AG04449 (cell line): ENCODE measurements at regions of chr11 and their contacts with region 1.

Region 1: DNA sequence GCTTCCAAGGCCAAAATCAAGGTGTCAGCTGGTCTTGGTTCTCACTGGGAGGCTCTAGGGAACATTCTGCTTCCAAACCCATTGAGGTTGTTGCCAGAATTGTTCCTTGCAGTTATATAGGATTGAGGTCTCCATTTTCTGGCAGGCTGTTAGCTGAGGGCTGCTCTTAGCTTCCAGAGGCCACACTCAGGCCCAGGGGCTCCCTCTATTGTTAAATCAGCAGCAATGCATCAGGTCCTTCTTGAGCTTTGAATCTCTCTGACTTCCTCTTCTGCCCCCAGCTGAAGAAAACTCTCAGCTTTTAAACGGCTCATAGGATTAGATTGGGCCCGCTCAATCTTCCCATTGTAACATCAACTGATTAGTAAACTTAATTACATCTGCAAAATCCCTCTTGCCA is 39.3 kb upstream of the BSX start:
- DNase-seq: no peak
- H3K4me3 ChIP-seq: no peak overlapping the region
- CTCF ChIP-seq: peak; percentile 76

Region 2: GRCh38 chr11:122578168-122578825 is 442.7 kb before region 1 on chr11:
- CTCF ChIA-PET with region 1: interaction called, 41 read pairs
- POLR2A ChIA-PET with region 1: no interaction called
- DNase-seq: no peak
- H3K4me3 ChIP-seq: no peak overlapping the region
- CTCF ChIP-seq: no peak

Region 3: GRCh38 chr11:122796128-122796717 is 224.7 kb before region 1 on chr11:
- CTCF ChIA-PET with region 1: interaction called, 14 read pairs
- POLR2A ChIA-PET with region 1: no interaction called
- DNase-seq: no peak
- H3K4me3 ChIP-seq: no peak overlapping the region
- CTCF ChIP-seq: peak; percentile 87

Region 4: GRCh38 chr11:122882857-122883645 is 137.9 kb before region 1 on chr11:
- CTCF ChIA-PET with region 1: interaction called, 14 read pairs
- POLR2A ChIA-PET with region 1: no interaction called
- DNase-seq: no peak
- H3K4me3 ChIP-seq: peak overlapping the region; percentile 65
- CTCF ChIP-seq: no peak

Region 5: GRCh38 chr11:122910775-122911174 is 110.2 kb before region 1 on chr11:
- CTCF ChIA-PET with region 1: interaction called, 42 read pairs
- POLR2A ChIA-PET with region 1: no interaction called
- DNase-seq: no peak
- H3K4me3 ChIP-seq: no peak overlapping the region
- CTCF ChIP-seq: no peak

Region 6: DNA sequence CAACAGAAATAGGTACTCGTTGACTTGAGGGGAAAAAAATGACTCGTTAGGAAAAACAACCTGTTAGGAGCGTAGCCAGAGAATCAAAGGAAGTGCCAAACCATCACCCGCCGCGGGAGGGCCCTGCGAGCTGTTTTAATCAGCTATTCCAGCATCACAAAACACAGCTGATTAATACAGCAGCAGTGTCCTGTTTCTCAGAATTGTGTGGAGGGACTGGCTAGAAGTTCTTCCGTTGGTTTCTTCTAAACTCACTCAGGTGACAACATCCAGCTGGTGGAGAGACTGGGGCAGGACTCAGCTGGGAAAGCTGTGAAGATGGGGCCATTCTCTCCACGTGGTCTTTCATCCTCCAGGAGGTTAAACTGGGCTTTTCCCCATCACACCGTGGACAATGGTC is 12.9 kb after region 1 on chr11:
- CTCF ChIA-PET with region 1: interaction called, 117 read pairs
- POLR2A ChIA-PET with region 1: no interaction called
- DNase-seq: no peak
- H3K4me3 ChIP-seq: no peak overlapping the region
- CTCF ChIP-seq: no peak

Region 7: GRCh38 chr11:123054301-123055065 is 33.5 kb after region 1 on chr11:
- CTCF ChIA-PET with region 1: interaction called, 22 read pairs
- POLR2A ChIA-PET with region 1: no interaction called
- DNase-seq: no peak
- H3K4me3 ChIP-seq: no peak overlapping the region
- CTCF ChIP-seq: peak; percentile 58